BJ (cell line): ENCODE measurements at regions of chr1 and their contacts with region 1.

Region 1: GRCh38 chr1:71049951-71050598 is 2.5 kb upstream of the PTGER3 start:
- DNase-seq: peak; percentile 12
- H3K4me3 ChIP-seq: no peak overlapping the region
- H3K27me3 ChIP-seq: peaks cover 20% of the 10 kb centered on the region
- CTCF ChIP-seq: peak; percentile 73

Region 2: DNA sequence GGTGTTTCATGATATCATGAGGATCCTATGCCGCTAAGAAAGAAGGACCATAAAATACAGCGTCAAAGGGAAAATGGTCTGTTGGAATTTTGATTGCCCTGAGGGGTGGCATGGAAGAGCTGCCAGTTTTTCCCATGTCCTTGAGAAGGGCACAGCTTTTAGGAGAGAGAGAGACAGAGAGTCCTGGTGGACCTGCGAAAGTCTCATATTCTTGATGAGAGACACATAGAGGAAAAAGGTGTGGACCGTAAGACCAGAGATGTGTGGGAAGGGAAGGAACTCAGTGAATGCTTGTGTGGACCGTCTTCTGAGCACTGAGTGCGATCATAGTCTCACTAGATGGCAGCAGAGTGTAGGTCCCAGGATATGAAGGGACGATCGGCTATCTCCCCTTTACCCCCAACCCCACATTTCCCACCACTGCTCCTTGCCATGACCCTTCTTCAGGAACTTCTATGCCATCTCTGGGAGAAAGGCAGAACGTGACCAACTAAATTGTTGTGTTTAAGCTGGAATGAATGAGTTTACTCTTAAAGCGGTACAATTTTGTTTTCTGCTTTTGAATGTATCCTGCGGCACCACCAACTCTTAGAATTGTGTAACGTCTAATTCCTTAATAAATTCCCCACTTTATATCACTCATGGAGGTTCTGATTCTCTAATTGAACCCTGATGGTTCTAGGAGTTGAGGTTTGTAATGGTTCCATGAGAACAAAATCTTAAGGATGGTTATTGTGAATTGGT is 521.3 kb before region 1 on chr1:
- CTCF ChIA-PET with region 1: interaction called, 33 read pairs
- POLR2A ChIA-PET with region 1: no interaction called
- DNase-seq: no peak
- H3K4me3 ChIP-seq: no peak overlapping the region
- H3K27me3 ChIP-seq: 0 out of 2 replicates have a peak, but pooled peaks cover 3% of the 10 kb centered on the region
- CTCF ChIP-seq: peak; percentile 67

Region 3: GRCh38 chr1:70685300-70686241 is 364.5 kb before region 1 on chr1:
- CTCF ChIA-PET with region 1: interaction called, 39 read pairs
- POLR2A ChIA-PET with region 1: no interaction called
- DNase-seq: no peak
- H3K4me3 ChIP-seq: no peak overlapping the region
- H3K27me3 ChIP-seq: no peaks in the 10 kb centered on the region
- CTCF ChIP-seq: peak; percentile 87